Psoas muscle (tissue), 8 donors: ENCODE measurements at regions of chr4 and their contacts with region 1.

Region 1: DNA sequence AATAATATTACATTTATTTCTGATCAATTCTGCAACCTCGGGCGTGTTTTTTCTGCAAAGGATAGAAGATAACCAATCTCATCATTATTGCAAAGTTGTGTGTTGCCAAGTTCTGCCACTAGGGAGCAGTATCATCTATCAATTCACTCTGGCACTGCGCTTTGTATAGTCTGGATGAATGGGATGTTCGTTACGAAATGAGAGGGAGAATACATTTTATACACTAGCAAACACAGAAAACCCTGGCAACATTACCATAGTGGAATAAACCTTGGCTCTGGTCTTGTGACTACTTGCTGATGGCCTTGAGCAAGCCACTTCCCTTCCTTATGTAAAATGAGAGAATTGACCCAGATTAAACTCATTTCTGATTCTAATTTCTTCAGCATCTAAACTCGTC is 97.5 kb upstream of the ZNF518B start:
- DNase-seq: no peak
- ATAC-seq: no peak
- H3K4me3 ChIP-seq: no peak overlapping the region
- H3K27ac ChIP-seq: no peak overlapping the region
- H3K4me1 ChIP-seq: no peaks in the 10 kb centered on the region
- H3K27me3 ChIP-seq: peaks cover 0 to 5% (median 4%) of the 10 kb centered on the region in 3 donors
- CTCF ChIP-seq: peak; percentile 66

Region 2: DNA sequence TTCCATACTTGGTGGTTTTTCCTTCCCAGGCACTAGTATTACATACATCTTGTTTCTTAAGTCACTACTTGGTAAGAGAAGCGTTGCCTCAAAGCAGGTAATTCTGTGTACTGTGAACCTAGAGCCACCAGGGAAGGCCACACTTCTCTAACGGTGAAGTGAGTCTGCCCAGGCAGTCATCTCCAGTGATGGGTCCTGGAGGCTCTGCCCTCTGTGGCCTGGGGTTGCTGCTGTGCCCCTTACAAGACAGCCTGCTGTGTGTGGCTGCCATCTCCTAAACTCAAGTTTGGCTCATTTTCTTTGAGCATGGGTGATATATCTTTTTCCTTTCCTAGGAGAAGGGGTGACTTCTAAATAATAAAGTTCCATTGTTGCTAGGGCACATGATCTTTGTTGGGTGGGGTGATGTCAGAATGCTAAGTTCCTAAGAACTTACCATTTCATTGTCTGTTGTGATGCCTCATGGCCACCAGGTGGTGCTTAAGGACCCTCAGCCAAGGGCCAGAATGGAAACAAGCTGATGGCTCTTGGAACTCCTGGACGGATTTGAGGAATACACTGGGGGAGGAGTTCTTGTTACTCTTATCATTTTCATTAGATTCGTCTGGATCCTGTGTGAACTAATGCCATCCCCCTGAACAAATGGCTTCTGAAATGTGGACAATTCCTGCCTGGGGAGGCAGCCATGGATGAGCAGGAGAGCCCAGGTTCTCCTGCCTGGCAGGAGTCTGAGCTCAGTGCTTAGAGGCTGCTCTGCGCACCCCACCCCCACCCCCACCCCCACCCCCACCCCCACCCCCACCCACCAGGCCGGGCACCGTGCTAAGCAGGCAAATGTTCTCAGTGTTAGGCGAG is 397.0 kb before region 1 on chr4:
- intact Hi-C with region 1: loop called (anchors 2 to 5 kb)
- DNase-seq: no peak
- ATAC-seq: peak; percentile 72 to 80 (median 74)
- H3K4me3 ChIP-seq: no peak overlapping the region
- H3K27ac ChIP-seq: no peak overlapping the region
- H3K4me1 ChIP-seq: no peaks in the 10 kb centered on the region
- H3K27me3 ChIP-seq: no peaks in the 10 kb centered on the region
- CTCF ChIP-seq: peak; percentile 77

Region 3: DNA sequence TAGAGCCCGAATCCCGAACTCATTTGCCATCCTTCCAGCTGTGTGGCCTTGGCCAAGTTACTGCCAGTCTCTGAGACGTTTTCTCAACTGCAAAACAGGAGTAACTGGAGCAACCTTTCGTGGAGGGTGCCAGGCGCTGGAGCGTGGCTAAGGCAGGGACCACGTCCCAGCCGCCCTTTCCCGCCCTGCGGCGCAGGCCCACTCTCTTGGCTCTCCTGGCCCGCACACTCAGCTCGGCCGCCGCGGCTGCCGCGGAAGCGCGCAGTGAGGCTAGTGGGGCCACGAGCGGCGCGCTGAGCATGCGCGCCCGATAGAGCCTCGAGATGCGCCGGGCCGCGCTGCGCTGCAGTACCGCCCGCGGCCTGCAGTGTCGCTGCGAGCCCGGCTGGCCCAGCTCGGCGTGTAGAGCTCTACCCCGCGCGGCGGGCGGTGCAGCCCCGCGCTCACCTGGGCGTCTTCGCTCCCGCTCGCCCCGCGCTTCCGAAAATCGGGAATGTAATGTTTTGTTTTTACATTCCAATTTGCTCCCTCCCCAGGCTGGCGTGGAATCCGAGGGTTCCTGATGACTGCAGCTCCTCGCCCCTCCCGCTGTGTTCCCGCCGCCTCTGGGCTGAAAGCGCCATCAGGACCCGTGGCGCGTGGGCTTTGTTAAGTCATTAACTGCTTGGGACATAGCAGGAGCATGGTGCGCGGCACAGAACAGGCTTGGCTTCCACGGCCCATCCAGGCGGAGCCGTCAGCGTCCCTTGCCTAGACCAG is 93.4 kb before region 1 on chr4:
- intact Hi-C with region 1: loop called in 1 of 2 experiments (anchors 5 kb)
- DNase-seq: peak; percentile 50 to 67
- ATAC-seq: peak; percentile 82 to 89 (median 86)
- H3K4me3 ChIP-seq: peak overlapping the region; percentile 51
- H3K27ac ChIP-seq: no peak overlapping the region
- H3K4me1 ChIP-seq: peaks cover 4% of the 10 kb centered on the region
- H3K27me3 ChIP-seq: peaks cover 0 to 43% (median 12%) of the 10 kb centered on the region in 3 donors
- CTCF ChIP-seq: peak; percentile 95